Left colon (tissue), 2 donors: ENCODE measurements at regions of chr2 and their contacts with region 1.

Region 1: DNA sequence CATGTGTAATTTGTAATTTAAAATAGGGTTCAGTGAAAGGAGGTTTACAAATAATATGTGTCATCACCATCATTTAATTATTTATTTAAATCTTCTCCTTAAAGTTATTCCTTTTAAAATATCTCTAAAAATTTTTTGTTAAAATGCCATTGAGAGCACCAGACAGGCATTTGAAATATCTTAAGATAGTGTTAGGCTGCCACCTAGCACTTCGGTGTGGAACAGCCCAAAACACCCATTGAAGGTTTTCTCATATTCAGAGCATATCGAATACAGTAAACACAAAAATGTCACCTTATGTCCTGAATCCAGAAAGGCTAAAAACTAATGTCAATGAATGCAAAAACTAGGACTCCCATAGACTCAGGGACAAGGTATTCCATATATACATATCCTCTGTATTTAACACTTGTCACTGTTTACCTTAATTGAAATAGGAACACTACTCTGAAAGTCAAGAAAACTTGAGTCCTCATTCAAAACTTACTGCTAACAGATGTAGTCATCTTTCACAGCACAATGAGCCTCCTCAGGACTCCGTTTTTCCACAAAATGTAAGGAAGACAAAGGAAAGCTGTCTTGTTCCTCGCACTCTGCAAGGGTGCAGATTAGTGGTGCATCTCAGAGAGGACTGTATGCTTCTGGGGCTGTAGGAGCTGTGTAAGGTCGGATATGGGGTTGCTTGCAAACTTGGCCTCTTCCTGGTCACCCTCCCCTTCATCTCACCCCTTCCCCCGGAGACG is 329.5 kb downstream of the PAX3 start:
- DNase-seq: peak in 1 of 2 donors; percentile 4
- ATAC-seq: peak; percentile 54

Region 2: DNA sequence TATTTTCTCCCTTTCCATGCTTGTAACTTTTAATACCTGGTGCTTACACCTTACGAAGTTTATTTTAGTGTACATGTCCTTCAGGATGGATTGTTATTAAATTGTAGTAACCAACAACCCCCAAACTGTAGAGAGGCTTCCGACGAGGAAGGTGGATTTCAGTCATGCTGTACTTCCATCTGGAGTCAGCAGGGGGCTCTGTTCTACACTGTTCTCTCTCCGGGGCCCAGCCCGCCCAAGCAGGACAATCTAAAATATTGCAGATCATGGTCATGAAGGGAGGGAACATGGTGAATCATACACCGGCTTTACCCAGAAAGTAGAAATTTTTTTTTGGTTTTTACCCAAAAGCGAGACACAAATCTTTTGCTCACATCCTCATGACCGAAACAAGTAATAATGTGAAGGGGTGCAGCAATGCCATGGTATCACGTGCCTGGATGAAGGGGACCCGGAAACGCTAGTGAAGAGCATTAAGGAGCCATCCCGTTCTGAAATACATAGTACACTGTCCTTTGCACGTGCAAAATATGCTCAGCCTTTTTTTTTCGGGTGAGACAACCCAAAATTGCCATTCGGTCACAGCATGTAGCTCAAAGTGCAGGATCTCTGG is 1281.9 kb before region 1 on chr2:
- intact Hi-C with region 1: loop called in 1 of 2 experiments (anchors 5 kb)
- DNase-seq: peak; percentile 39 to 78
- ATAC-seq: peak; percentile 83

Region 3: DNA sequence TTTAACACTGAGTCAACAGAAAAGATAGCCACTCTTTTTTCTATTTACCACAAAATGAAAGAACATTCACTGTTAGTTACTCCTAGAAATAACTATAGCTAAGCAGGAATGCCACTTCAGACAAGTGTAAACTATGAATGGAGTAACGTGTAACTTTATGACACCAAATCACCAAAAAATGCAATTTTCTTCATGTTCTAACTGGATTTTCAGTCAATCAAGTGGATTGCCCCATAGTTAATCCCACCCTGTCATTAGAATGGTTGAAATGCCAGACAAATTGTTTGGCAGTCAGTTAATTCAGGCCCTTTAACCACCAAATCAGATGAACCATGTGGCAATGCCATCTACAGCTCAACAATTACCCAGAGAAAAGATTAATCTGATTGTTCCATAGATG is 407.0 kb before region 1 on chr2:
- intact Hi-C with region 1: no loop called
- DNase-seq: no peak
- ATAC-seq: no peak

Region 4: GRCh38 chr2:221573430-221574230 is 395.6 kb before region 1 on chr2:
- intact Hi-C with region 1: loop called in 1 of 2 experiments (anchors 10 kb)
- DNase-seq: peak; percentile 66 to 90
- ATAC-seq: peak; percentile 69

Region 5: DNA sequence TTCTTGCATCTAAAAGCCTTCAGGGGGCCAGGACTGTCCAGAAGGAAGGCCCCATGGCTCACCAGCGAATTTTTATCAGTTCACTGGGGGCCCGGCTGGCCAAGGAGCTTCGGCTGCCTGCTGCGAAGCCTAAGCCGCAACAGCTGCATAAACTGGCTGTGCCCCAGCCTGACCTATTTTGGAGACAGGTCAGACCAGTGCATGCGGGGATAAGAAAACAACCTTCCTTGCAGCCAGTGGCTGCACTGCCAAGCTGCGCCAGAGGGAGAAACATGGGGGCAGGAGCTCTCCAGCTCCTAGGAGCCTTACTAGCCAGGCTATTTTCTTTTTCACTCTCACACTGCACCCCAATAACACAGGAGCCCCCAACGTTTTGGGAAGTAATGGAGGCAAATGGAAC is 314.4 kb after region 1 on chr2:
- intact Hi-C with region 1: no loop called
- DNase-seq: no peak
- ATAC-seq: no peak